HepG2 (cell line): ENCODE measurements at regions of chr3 and their contacts with region 1.

Region 1: DNA sequence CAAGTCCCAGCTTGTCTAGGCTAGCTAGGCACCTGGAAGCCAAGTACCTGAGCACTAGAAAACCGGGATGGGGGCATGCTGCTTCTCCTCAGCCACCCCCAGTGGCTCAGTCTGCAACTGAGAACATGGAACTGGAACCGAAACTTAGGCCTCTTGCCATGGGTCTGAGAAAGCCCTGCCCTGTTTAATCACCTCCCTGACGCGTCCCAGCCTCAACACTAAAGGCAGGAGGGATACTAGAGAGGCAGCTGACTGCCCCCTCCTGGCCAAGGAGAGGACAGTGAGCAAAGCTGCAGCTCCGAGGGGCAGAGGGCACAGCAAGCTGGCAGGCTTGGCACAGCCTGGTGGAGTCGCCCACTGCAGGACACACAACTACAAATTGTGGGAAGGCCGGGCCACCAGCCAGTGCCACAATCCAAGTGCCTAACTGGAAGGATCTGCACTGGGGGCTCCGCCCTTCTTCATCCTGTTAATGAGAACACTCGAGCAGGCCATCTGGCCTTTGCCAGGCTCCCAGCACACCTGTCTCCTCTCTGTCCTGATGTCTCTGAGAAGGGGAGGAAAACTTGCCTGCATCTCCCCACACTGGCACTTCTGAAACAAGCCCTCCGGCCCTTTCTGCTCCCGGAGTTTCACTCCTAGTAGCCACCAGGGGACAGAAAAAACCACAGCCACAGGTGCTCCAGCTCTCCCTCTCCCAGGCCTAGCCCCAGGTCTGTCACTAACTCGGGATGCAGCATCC is 53.7 kb downstream of the BDH1 start:
- DNase-seq: peak; percentile 78
- ATAC-seq: peak; percentile 74
- H3K4me3 ChIP-seq: peak overlapping the region; percentile 50 to 71 (median 53)
- H3K27ac ChIP-seq: peak overlapping the region; percentile 28
- H3K4me1 ChIP-seq: peaks cover 52% of the 10 kb centered on the region
- H3K27me3 ChIP-seq: no peaks in the 10 kb centered on the region
- CTCF ChIP-seq: peak; percentile 95
- EP300 ChIP-seq: no peak
- POLR2A ChIP-seq: no peak
- RAD21 ChIP-seq: peak; percentile 91

Region 2: DNA sequence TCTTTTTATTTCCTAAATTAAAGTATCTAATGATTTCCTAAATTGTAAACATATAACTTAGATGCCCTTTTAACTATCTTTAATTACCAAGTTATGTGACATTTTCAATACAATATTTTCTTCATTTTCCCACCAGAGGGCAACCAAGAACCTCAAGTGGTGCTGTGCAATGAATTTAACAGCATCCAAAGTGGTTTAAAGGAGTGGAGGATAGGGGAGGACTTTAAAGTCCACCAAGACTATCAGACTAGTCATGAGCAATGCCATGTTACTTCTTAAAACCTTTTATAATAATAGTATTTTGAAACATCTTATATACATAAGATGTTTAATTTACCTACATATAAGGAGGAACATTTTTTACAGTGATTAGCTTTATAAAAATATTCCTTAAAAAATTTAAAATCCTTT is 278.0 kb before region 1 on chr3:
- CTCF ChIA-PET with region 1: interaction called, 13 read pairs
- POLR2A ChIA-PET with region 1: no interaction called
- in situ Hi-C with region 1: no loop called
- intact Hi-C with region 1: loop called (anchors 1 kb)
- DNase-seq: peak; percentile 56
- ATAC-seq: peak; percentile 58; the same call in 2 of the 3 replicates
- H3K4me3 ChIP-seq: no peak overlapping the region
- H3K27ac ChIP-seq: no peak overlapping the region
- H3K4me1 ChIP-seq: peaks cover 28% of the 10 kb centered on the region
- H3K27me3 ChIP-seq: no peaks in the 10 kb centered on the region
- CTCF ChIP-seq: peak; percentile 62
- EP300 ChIP-seq: no peak
- POLR2A ChIP-seq: no peak
- RAD21 ChIP-seq: no peak; the same call in 1 of the 2 replicates

Region 3: GRCh38 chr3:197278933-197279332 is 223.1 kb before region 1 on chr3:
- CTCF ChIA-PET with region 1: no interaction called
- POLR2A ChIA-PET with region 1: no interaction called
- in situ Hi-C with region 1: no loop called
- intact Hi-C with region 1: loop called (anchors 5 kb)
- DNase-seq: no peak
- ATAC-seq: no peak
- H3K4me3 ChIP-seq: no peak overlapping the region
- H3K27ac ChIP-seq: peak overlapping the region; percentile 18
- H3K4me1 ChIP-seq: peaks cover 46% of the 10 kb centered on the region
- H3K27me3 ChIP-seq: no peaks in the 10 kb centered on the region
- CTCF ChIP-seq: no peak
- EP300 ChIP-seq: no peak
- POLR2A ChIP-seq: no peak
- RAD21 ChIP-seq: no peak

Region 4: DNA sequence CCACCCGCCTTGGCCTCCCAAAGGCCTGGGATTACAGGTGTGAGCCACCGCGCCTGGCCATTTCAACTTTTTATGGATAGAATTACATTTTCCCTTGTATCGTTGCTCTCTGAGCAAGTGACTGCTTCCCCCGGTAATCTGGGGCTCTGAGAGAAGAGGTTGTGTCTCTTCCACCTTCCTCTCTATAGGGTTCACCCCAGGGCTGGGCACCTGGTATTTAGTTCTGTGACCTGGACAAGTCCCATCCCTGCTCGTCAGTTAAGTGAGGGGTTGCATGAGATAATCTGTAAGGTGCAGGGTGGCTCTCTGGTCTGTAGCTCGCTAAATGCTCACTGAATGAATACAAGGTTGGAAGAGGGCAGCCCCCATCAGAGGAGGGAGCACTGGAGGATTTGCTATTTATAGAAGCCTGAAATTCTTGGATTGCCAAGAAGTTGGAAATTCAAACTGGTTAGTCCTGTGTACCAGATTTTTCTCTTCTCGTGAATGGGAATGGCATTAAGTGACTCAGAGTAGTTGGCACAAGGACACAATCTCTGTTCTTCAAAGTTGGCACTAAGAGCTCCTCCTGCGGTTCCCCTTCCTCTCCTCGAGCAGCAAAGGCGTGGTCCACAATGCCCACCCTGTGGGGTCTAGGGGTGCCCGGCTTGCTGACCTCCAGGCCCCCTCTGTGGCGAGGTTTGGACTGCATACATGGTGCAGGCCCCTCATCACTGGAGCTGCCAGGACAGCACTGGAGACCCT is 135.6 kb before region 1 on chr3:
- CTCF ChIA-PET with region 1: no interaction called
- POLR2A ChIA-PET with region 1: interaction called, 16 read pairs
- in situ Hi-C with region 1: no loop called
- intact Hi-C with region 1: loop called (anchors 5 kb)
- DNase-seq: no peak
- ATAC-seq: no peak
- H3K4me3 ChIP-seq: no peak overlapping the region
- H3K27ac ChIP-seq: no peak overlapping the region
- H3K4me1 ChIP-seq: peaks cover 87% of the 10 kb centered on the region
- H3K27me3 ChIP-seq: no peaks in the 10 kb centered on the region
- CTCF ChIP-seq: no peak
- EP300 ChIP-seq: no peak
- POLR2A ChIP-seq: no peak
- RAD21 ChIP-seq: no peak

Region 5: GRCh38 chr3:197466586-197467399 is 35.3 kb before region 1 on chr3:
- CTCF ChIA-PET with region 1: no interaction called
- POLR2A ChIA-PET with region 1: interaction called, 18 read pairs
- in situ Hi-C with region 1: no loop called
- intact Hi-C with region 1: no loop called
- DNase-seq: no peak
- ATAC-seq: 0 out of 3 replicates have a peak, but pooled peaks have one; percentile 1
- H3K4me3 ChIP-seq: peak overlapping the region; percentile 28 to 56 (median 36); a peak in 5 of 6 replicates
- H3K27ac ChIP-seq: peak overlapping the region; percentile 96
- H3K4me1 ChIP-seq: peaks cover 87% of the 10 kb centered on the region
- H3K27me3 ChIP-seq: no peaks in the 10 kb centered on the region
- CTCF ChIP-seq: no peak
- EP300 ChIP-seq: no peak
- POLR2A ChIP-seq: peak in 1 of 2 experiments; percentile 10; a peak in 1 of 4 replicates
- RAD21 ChIP-seq: no peak